ENCODE measurements at regions of chr3 and their contacts with region 1.

Region 1: GRCh38 chr3:170908235-170909116 is at the start of gene EIF5A2:
- DNase-seq: peak; percentile 93
- ATAC-seq: peak; percentile 94
- H3K4me3 ChIP-seq: peak within 1 kb of the TSS; percentile 58 to 79 (median 67)
- H3K4me3 Mint-ChIP-seq: peak within 1 kb of the TSS; percentile 96
- H3K27ac ChIP-seq: peak within 1 kb of the TSS; percentile 7 to 68
- H3K27ac Mint-ChIP-seq: peak within 1 kb of the TSS; percentile 86
- H3K4me1 ChIP-seq: peaks cover 13 to 16% of the 10 kb centered on the region in 2 donors
- H3K4me1 Mint-ChIP-seq: peaks cover 22% of the 10 kb centered on the region
- H3K27me3 ChIP-seq: no peaks in the 10 kb centered on the region
- H3K27me3 Mint-ChIP-seq: no peaks in the 10 kb centered on the region
- CTCF ChIP-seq: no peak
- total RNA-seq, gene EIF5A2: 4.1 and 6.3 TPM in 2 replicates

Region 2: GRCh38 chr3:171005252-171006047 is 97.0 kb after region 1 on chr3:
- CTCF ChIA-PET with region 1: no interaction called
- POLR2A ChIA-PET with region 1: no interaction called
- intact Hi-C with region 1: no loop called
- DNase-seq: no peak
- ATAC-seq: no peak
- H3K4me3 ChIP-seq: no peak overlapping the region
- H3K4me3 Mint-ChIP-seq: no peak overlapping the region
- H3K27ac ChIP-seq: no peak overlapping the region
- H3K27ac Mint-ChIP-seq: no peak overlapping the region
- H3K4me1 ChIP-seq: no peaks in the 10 kb centered on the region
- H3K4me1 Mint-ChIP-seq: no peaks in the 10 kb centered on the region
- H3K27me3 ChIP-seq: no peaks in the 10 kb centered on the region
- H3K27me3 Mint-ChIP-seq: no peaks in the 10 kb centered on the region
- CTCF ChIP-seq: no peak

Region 3: DNA sequence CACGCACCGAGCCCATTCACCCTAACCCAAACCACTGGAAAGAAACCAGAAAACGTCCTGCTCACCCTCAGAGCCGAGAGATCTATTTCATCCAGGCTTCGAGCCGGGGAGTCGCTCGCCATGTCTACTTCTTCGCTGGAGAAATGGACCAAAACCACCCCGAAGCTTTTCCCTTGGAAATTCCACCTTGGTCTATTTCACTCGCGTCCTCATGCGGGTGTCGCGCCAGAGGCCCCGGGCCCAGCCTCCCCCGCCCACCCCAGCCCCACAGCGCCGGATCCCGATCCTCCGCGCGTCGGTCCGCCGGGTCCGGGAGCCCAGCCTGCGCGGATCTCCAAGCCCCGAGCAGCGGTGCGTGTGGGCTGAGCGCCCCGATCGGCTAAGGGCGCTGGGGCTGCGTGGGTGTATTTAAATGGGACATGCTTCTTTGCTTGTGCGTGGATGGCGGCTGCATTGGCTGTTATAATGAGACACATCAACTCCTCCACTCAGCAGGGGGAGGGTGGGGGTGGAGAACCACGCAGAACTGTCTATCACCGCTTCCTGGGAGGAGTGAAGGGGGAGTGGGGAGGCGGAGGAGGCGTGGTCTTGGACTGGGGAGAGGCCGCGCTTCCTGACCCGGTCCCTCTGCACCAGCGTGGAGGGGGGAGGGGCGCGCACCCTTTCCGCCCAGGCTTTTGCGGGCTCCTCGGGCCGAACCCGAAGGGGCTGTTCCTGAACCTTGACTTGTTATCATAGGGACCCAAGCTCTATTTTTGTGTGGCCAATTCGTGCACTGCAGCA is 551.7 kb after region 1 on chr3 and contains the start of gene TNIK:
- CTCF ChIA-PET with region 1: no interaction called
- POLR2A ChIA-PET with region 1: no interaction called
- intact Hi-C with region 1: loop called (anchors 5 kb)
- DNase-seq: peak; percentile 87
- ATAC-seq: peak; percentile 88
- H3K4me3 ChIP-seq: peak within 1 kb of the TSS; percentile 60 to 92 (median 80)
- H3K4me3 Mint-ChIP-seq: peak within 1 kb of the TSS; percentile 90
- H3K27ac ChIP-seq: peak within 1 kb of the TSS in 1 of 2 donors; percentile 32
- H3K27ac Mint-ChIP-seq: peak within 1 kb of the TSS; percentile 88
- H3K4me1 ChIP-seq: peaks cover 26 to 27% of the 10 kb centered on the region in 2 donors
- H3K4me1 Mint-ChIP-seq: peaks cover 39% of the 10 kb centered on the region
- H3K27me3 ChIP-seq: peaks cover 0 to 15% (median 2%) of the 10 kb centered on the region in 4 experiments
- H3K27me3 Mint-ChIP-seq: peaks cover 18% of the 10 kb centered on the region
- CTCF ChIP-seq: peak; percentile 40
- total RNA-seq, gene TNIK: 7.5 and 7.7 TPM in 2 replicates

Measured in B cell (primary cell).